Ovary (tissue), 10 donors: ENCODE measurements at regions of chr19 and their contacts with region 1.

Region 1: DNA sequence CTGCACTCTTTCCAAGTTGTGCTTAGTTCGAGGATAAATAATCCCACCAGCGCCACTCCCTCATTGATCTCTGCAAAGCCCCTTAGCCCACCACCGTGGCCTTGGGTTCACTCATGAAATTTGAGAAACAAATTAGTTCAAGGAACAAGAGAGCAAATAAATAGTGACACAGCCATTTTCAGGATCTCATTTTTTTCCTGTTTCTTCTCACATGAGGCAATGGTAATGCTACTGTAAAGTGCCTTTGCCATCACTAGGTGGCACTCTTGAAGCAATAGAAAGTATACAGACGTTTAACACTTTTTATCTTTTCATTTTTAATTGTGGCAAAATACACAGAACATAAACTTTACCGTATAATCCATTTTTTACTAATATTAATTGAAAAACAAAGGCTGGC is 76.8 kb upstream of the ZNF835 start:
- DNase-seq: peak in 3 of 5 donors; percentile 34 to 70 (median 42)
- H3K4me3 ChIP-seq: no peak overlapping the region
- H3K27ac ChIP-seq: peak overlapping the region in 1 of 2 donors; percentile 66
- H3K4me1 ChIP-seq: peaks cover 2% of the 10 kb centered on the region
- H3K27me3 ChIP-seq: no peaks in the 10 kb centered on the region
- CTCF ChIP-seq: peak; percentile 55 to 88 (median 82)
- EP300 ChIP-seq: no peak
- POLR2A ChIP-seq: no peak

Region 2: DNA sequence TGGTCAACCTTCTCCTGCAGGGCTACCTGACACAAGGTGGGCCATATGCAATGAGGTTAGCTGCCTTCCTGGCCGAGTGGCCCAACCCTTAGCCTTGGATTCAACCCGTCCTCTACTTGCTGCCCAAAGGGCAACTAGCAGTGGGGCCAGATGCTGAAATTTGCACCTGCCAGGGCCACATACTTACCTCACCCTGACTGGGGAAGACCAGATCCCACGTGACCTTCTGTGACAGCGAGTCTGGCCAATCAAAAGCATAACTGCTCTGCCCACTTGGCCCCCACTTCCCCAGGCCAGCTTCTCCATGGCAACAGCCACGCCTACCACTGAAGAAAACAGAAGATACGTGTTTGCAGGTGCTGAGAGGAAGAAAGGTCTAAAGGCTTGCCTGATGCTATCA is 81.2 kb after region 1 on chr19:
- intact Hi-C with region 1: loop called in 1 of 4 experiments (anchors 10 kb)
- DNase-seq: no peak
- H3K4me3 ChIP-seq: no peak overlapping the region
- H3K27ac ChIP-seq: no peak overlapping the region
- H3K4me1 ChIP-seq: peaks cover 13% of the 10 kb centered on the region
- H3K27me3 ChIP-seq: no peaks in the 10 kb centered on the region
- CTCF ChIP-seq: no peak
- EP300 ChIP-seq: no peak
- POLR2A ChIP-seq: no peak

Region 3: DNA sequence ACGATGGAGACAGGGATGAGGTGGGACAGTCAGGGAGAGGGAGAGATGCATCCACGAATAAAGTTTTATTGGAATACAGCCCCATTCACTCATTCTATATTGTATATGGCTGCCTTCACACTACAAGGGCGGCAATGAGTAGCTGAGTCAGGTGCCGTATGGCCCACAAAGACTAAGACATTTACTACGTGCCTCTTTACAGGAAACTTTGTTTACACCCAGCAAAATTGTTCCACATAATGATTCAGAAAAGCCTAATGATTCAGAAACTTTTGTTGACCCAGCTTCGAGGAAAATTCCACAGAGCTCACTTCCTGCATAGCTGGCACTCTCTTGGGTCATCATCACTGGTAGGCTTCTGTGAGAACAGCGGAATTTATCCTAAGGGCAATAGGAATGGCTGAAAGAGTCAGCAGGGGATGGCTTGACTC is 179.4 kb after region 1 on chr19:
- intact Hi-C with region 1: loop called in 1 of 4 experiments (anchors 10 kb)
- DNase-seq: no peak
- H3K4me3 ChIP-seq: no peak overlapping the region
- H3K27ac ChIP-seq: no peak overlapping the region
- H3K4me1 ChIP-seq: peaks cover 3% of the 10 kb centered on the region
- H3K27me3 ChIP-seq: no peaks in the 10 kb centered on the region
- CTCF ChIP-seq: no peak
- EP300 ChIP-seq: no peak
- POLR2A ChIP-seq: no peak

Region 4: DNA sequence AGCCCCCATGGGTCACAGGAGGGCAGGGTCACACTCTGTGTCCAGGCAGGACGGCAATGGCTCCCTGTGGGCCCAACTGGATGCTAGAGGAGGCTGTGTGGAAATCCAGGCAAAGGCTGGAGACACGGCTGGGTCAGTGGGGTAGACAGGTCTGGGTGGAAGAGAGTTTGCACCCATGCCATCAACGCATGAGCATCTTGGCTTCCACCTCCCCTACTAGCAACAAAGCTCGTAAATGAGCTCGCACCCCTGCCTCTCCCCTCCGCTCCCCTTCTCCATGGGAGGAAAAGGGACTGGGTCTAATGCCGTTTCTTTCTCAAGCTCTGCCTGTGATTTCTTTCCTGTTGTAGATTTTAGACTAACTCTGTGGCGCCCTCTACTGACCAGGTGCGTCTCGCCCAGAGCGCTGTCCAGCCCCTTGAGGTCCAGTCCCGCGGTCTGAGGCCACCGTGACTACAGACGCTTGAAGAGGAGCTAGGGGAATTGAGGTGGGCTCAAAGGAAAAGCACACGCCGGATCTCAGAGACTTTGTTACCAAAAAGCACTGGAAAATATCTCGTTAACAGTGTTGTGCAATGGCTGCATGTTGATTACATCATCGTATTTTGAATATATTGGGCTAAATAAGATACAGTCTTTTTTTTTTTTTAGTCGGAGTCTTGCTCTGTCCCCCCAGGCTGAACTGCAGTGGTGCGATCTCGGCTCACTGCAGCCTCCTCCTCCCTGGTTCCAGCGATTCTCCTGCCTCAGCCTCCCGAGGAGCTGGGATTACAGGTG is 320.7 kb after region 1 on chr19:
- intact Hi-C with region 1: loop called in 1 of 4 experiments (anchors 5 kb)
- DNase-seq: peak; percentile 86 to 91 (median 88)
- H3K4me3 ChIP-seq: no peak overlapping the region
- H3K27ac ChIP-seq: peak overlapping the region in 1 of 2 donors; percentile 48
- H3K4me1 ChIP-seq: peaks cover 4% of the 10 kb centered on the region
- H3K27me3 ChIP-seq: no peaks in the 10 kb centered on the region
- CTCF ChIP-seq: peak; percentile 53 to 89 (median 83)
- EP300 ChIP-seq: no peak
- POLR2A ChIP-seq: no peak

Region 5: DNA sequence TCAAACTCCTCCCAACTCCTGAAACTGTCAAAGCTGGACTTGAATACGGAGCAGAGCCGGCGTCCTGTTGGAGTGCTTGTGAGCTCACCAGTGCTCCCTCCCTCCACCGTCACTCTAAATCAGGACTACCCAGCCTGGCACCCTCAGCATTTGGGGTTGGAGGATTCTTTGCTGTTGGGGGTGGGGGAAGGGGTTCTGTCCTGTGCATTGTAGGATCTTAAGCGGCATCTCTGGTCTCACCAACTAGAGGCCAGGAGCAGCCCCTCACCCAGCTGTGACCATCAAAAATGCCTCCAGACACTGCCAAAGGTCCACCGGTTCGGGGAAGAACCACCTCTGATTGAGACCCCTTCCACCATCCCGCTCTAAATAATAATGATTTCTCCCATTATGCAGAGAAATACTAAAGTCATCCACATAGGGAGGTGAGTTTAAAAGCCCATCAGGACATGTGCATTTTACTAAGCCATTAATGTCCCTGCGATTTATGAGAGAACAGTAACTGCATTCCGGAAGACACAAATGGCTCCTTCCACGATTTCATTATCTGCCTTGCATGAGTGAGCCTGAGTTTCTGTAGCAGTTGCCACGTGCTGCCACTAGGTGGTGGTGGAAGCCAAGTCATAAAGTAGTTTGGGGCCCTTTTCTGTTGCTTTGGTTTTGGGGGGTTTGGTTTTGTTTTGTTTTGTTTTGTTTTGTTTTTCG is 355.3 kb after region 1 on chr19:
- intact Hi-C with region 1: loop called in 3 of 4 experiments (anchors 2 to 5 kb)
- DNase-seq: peak; percentile 49 to 76 (median 72)
- H3K4me3 ChIP-seq: no peak overlapping the region
- H3K27ac ChIP-seq: no peak overlapping the region
- H3K4me1 ChIP-seq: no peaks in the 10 kb centered on the region
- H3K27me3 ChIP-seq: no peaks in the 10 kb centered on the region
- CTCF ChIP-seq: peak; percentile 40 to 84 (median 72)
- EP300 ChIP-seq: no peak
- POLR2A ChIP-seq: no peak